Right cardiac atrium (tissue), 5 donors: ENCODE measurements at regions of chr1 and their contacts with region 1.

Region 1: GRCh38 chr1:39159224-39160036 is 45.1 kb upstream of the MACF1 start:
- DNase-seq: no peak
- ATAC-seq: peak in 1 of 2 donors; percentile 57
- H3K4me3 ChIP-seq: no peak overlapping the region
- H3K27ac ChIP-seq: no peak overlapping the region
- H3K4me1 ChIP-seq: peaks cover 23% of the 10 kb centered on the region
- H3K27me3 ChIP-seq: no peaks in the 10 kb centered on the region

Region 2: DNA sequence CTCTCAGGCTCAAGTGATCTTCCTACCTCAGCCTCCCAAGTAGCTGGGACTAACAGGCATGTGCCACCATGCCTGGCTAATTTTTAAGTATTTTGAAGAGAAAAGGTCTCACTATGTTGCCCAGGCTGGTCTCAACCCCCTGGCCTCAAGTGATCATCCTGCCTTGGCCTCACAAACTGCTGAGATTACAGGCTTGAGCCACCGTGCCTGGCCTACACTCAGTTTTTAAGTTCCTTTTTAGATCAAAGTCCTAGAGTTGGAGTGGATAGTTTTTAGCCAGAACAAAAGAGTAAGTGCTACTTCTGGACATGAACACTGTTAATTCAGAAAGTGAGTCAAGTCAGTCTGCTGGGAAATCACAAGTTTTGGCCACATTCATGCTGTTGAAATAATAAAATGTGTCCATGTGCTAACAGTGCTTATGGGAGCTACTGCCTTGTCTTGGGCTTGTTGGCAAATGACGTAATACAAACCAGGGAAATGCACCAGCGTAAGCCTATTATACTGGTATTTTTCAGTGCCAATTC is 49.0 kb before region 1 on chr1:
- intact Hi-C with region 1: loop called in 1 of 4 experiments (anchors 10 kb)
- DNase-seq: peak in 1 of 3 donors; percentile 25
- ATAC-seq: peak; percentile 61 to 71
- H3K4me3 ChIP-seq: no peak overlapping the region
- H3K27ac ChIP-seq: no peak overlapping the region
- H3K4me1 ChIP-seq: peaks cover 8% of the 10 kb centered on the region
- H3K27me3 ChIP-seq: no peaks in the 10 kb centered on the region

Region 3: GRCh38 chr1:39250460-39251240 is 91.2 kb after region 1 on chr1:
- intact Hi-C with region 1: no loop called
- DNase-seq: no peak
- ATAC-seq: no peak
- H3K4me3 ChIP-seq: no peak overlapping the region
- H3K27ac ChIP-seq: no peak overlapping the region
- H3K4me1 ChIP-seq: no peaks in the 10 kb centered on the region
- H3K27me3 ChIP-seq: no peaks in the 10 kb centered on the region